PC-3 (cell line): ENCODE measurements at regions of chr2 and their contacts with region 1.

Region 1: DNA sequence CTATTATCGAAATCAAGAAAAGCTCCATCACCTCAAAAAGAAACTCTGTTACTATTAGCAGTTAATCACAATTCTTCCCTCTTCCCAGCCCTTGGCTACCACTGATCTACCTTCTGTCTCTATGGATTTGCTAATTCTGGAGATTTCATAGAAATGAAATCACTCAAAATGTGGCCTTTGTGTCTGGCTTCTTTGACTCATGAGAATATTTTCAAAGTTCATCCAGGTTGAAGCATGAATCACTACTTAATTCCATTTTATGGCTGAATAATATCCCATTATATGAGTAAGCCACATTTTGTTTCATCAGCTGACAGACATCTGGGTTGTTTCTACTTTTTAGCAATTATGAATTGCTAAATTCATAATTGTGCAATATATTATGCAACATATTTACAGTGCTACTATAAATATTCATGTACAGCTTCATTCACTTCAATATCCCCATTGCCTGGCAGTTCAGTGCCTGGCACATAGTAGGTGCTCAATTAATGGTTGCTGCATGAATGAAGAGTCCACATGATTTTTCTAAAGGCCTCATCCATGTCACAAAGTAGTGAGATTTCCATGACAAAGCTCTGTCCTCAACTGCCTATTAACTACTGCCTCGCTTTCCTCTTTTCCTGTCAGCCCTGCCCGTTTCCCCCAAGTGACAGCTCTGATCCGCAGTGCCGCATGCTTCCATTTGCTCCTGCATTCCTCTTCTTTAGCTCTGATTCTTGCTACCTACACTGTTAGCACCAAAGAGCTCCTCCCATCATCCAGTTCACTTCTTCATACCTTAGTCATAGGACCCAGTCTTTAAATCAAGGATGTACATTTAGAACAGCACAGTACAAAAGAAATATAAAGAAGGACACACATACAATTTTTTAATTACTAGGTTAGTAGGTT is 32.8 kb downstream of the CCDC93 start:
- DNase-seq: peak; percentile 89
- ATAC-seq: peak; percentile 83
- H3K4me3 ChIP-seq: no peak overlapping the region
- H3K27ac ChIP-seq: peak overlapping the region; percentile 78
- H3K4me1 ChIP-seq: peaks cover 38% of the 10 kb centered on the region
- H3K27me3 ChIP-seq: no peaks in the 10 kb centered on the region
- CTCF ChIP-seq: no peak

Region 2: DNA sequence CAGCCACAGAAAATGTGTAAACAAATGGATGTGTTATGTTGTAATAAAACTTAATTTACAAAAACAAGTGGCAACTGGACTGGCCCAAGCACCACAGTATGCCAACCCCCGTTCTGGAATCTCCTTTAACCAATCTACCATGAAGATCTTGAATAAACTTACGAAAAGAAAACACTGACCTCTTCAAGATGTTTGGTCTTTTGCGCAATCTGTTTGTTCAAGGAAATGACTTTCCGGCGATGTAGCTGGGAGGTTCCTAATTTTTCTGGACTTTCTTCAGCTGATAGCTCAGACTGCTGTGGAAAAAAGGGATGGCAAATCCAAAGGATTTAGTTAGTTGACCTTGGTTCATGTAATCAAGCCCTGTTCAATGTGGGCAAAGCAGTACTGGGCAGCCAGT is 22.8 kb before region 1 on chr2:
- CTCF ChIA-PET with region 1: no interaction called
- POLR2A ChIA-PET with region 1: no interaction called
- intact Hi-C with region 1: loop called (anchors 1 kb)
- DNase-seq: peak; percentile 93
- ATAC-seq: peak; percentile 82
- H3K4me3 ChIP-seq: no peak overlapping the region; the same call in 1 of the 2 replicates
- H3K27ac ChIP-seq: peak overlapping the region; percentile 83
- H3K4me1 ChIP-seq: peaks cover 26% of the 10 kb centered on the region
- H3K27me3 ChIP-seq: no peaks in the 10 kb centered on the region
- CTCF ChIP-seq: no peak